Activated naive CD8-positive, alpha-beta T cell treated with anti-CD3 and anti-CD28 coated beads, Interleukin-2, amount 10 ng/mL, durations not matched to agents 7 days and 5 days (primary cell): ENCODE measurements at regions of chr11 and their contacts with region 1.

Region 1: DNA sequence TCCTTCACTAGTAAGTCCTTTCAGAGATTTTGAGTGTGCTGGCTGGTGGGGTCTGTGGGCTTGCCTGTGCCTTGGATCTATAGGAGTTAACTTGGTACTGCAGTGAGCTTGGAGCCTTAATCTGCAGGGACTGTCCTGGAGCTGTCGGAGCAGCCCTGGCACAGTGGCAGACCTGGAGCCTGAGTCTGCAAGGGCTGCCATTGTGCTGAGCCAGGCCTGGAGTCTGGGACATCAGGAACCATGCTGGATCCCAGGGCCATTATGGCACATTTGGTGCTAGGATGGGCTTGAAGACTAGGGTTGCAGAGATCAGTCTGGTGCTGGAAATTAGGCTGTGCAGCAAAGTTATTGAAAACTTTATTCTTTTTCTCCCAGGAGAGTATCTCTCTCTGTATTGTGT is 665.4 kb downstream of the METTL15 start:
- DNase-seq: no peak
- ATAC-seq: no peak
- H3K4me3 Mint-ChIP-seq: no peak overlapping the region
- H3K27ac Mint-ChIP-seq: no peak overlapping the region
- H3K4me1 Mint-ChIP-seq: no peaks in the 10 kb centered on the region
- H3K27me3 Mint-ChIP-seq: no peaks in the 10 kb centered on the region

Region 2: DNA sequence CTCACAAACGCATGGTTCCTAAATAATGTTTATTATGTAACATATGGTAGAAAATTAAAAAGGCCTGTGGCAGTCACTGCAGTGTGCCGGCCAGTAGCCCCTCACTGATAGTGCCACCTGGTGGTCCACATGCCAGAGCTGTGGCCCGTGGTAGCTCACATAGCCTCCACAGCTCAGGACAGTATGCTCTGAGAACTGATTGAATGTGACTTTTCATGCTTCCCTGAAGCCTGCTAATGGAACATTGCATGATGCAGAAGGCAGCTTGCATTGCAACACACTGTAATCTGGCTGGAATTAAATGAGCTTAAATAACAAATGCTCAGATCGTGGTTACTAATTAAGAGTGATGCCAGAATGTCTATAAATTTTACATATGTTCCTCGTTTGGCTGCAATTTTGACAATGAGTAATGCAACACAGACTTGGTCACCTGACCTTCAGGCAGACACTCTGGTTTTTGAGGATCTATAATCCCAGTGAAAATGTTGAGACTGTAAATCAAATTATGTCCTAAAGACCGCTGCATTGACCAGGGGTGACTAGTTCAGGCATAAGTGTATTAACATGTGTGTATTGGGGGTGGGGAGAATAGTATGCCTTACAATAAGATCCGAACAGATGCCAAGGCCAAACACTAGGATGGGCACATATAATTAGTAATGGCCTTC is 99.0 kb before region 1 on chr11:
- POLR2A ChIA-PET with region 1: no interaction called
- DNase-seq: no peak
- ATAC-seq: no peak
- H3K4me3 Mint-ChIP-seq: no peak overlapping the region
- H3K27ac Mint-ChIP-seq: no peak overlapping the region
- H3K4me1 Mint-ChIP-seq: no peaks in the 10 kb centered on the region
- H3K27me3 Mint-ChIP-seq: no peaks in the 10 kb centered on the region

Region 3: GRCh38 chr11:30304620-30305019 is 1531.0 kb after region 1 on chr11:
- POLR2A ChIA-PET with region 1: interaction called, 10 read pairs
- DNase-seq: no peak
- ATAC-seq: no peak
- H3K4me3 Mint-ChIP-seq: no peak overlapping the region
- H3K27ac Mint-ChIP-seq: no peak overlapping the region
- H3K4me1 Mint-ChIP-seq: no peaks in the 10 kb centered on the region
- H3K27me3 Mint-ChIP-seq: peaks cover 11% of the 10 kb centered on the region